ENCODE measurements at regions of chr2 and their contacts with region 1.

Region 1: DNA sequence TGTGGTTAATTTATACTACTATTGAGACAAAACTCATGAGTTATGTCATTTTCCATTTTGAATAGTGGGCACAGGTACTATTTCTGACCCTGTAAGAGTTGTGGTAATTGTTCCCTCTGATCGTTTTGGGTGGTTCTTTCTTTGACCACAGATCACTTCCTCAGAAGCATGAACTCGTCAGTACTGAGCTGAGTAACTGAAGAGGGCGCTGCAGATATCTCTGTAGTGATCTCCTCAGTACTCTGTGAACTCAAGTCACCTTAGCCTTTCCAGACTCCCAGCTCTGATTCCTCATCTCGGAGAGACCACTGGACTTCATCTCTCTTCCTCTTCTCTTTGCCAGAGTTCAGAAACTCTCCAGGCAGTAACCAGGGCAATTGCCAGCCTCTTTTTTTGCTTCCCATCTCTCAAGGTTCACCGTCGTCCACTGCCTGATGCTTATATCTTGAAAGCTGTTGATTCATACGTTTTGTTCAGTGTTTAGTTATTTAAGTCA is 9.4 kb upstream of the IL1RL1 start:
- DNase-seq: peak; percentile 47
- ATAC-seq: peak; percentile 100
- H3K4me3 ChIP-seq: no peak overlapping the region
- H3K27ac ChIP-seq: no peak overlapping the region
- H3K4me1 ChIP-seq: no peaks in the 10 kb centered on the region
- H3K27me3 ChIP-seq: no peaks in the 10 kb centered on the region
- CTCF ChIP-seq: peak; percentile 55 to 67 (median 57)
- EP300 ChIP-seq: peak in 1 of 2 experiments; percentile 52; a peak in 1 of 4 replicates
- POLR2A ChIP-seq: no peak
- RAD21 ChIP-seq: peak; percentile 55

Region 2: DNA sequence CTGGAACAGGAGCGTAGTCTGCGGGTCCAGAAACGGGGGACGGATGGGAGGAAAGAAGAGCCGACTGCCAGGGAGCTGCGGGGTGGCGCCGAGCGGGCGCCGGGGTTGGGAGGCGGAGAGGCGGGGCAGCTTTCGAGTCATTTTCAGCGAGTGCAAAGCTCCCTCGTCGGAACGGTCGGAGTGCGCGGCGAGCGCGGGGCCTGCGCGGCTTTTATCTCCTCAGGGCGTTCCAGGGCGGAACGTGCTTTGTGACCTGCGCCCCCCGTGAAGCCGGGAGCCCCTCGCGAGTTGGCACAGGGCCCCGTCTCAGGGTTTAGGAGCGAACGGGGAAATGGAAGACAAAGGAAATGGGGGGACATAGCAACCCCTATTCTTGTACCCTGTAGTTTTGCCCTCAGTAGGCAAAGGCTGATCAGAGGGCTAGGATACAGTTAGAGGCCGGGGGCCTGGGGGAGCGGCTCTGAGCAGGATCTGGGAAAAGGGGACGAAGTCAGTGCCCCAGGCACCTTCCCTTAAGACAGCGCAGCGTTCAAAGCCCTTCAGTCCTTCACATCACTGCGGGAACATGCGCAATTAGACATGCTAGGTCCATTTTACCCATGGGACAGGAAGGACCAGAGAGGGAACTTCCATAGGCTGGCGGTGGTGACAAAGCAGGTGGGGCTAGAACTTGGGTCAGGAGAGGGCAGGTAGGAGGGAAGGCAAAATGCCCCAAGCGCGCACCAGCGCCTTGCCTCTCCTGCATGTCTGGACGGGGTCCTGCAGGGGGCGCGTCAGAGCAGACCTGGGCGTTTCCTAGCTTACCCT is 50.7 kb before region 1 on chr2:
- CTCF ChIA-PET with region 1: interaction called, 14 read pairs
- POLR2A ChIA-PET with region 1: no interaction called
- RAD21 ChIA-PET with region 1: interaction called, 5 read pairs
- SMC1A ChIA-PET with region 1: interaction called, 5 read pairs
- in situ Hi-C with region 1: no loop called
- intact Hi-C with region 1: no loop called
- DNase-seq: no peak
- ATAC-seq: peak; percentile 80
- H3K4me3 ChIP-seq: no peak overlapping the region
- H3K27ac ChIP-seq: no peak overlapping the region
- H3K4me1 ChIP-seq: no peaks in the 10 kb centered on the region
- H3K27me3 ChIP-seq: no peaks in the 10 kb centered on the region; a peak in 1 of 4 replicates
- CTCF ChIP-seq: peak; percentile 58 to 63 (median 60)
- EP300 ChIP-seq: no peak
- POLR2A ChIP-seq: no peak
- RAD21 ChIP-seq: 0 out of 2 replicates have a peak, but pooled peaks have one; percentile 25

Region 3: GRCh38 chr2:102283996-102284395 is 17.9 kb before region 1 on chr2:
- CTCF ChIA-PET with region 1: interaction called, 10 read pairs
- POLR2A ChIA-PET with region 1: no interaction called
- RAD21 ChIA-PET with region 1: interaction called, 5 read pairs
- SMC1A ChIA-PET with region 1: no interaction called
- in situ Hi-C with region 1: no loop called
- intact Hi-C with region 1: no loop called
- DNase-seq: no peak
- ATAC-seq: no peak
- H3K4me3 ChIP-seq: no peak overlapping the region
- H3K27ac ChIP-seq: no peak overlapping the region
- H3K4me1 ChIP-seq: no peaks in the 10 kb centered on the region
- H3K27me3 ChIP-seq: no peaks in the 10 kb centered on the region; a peak in 1 of 4 replicates
- CTCF ChIP-seq: no peak
- EP300 ChIP-seq: no peak
- POLR2A ChIP-seq: no peak
- RAD21 ChIP-seq: no peak

Region 4: GRCh38 chr2:102291318-102292251 is 10.3 kb before region 1 on chr2:
- CTCF ChIA-PET with region 1: interaction called, 15 read pairs
- POLR2A ChIA-PET with region 1: no interaction called
- RAD21 ChIA-PET with region 1: interaction called, 6 read pairs
- SMC1A ChIA-PET with region 1: interaction called, 4 read pairs
- in situ Hi-C with region 1: no loop called
- intact Hi-C with region 1: no loop called
- DNase-seq: no peak
- ATAC-seq: no peak
- H3K4me3 ChIP-seq: no peak overlapping the region
- H3K27ac ChIP-seq: no peak overlapping the region
- H3K4me1 ChIP-seq: no peaks in the 10 kb centered on the region
- H3K27me3 ChIP-seq: no peaks in the 10 kb centered on the region; a peak in 3 of 4 replicates
- CTCF ChIP-seq: no peak
- EP300 ChIP-seq: no peak
- POLR2A ChIP-seq: no peak
- RAD21 ChIP-seq: no peak

Region 5: GRCh38 chr2:102355526-102356380 is 53.8 kb after region 1 on chr2 and contains the start of gene IL18R1:
- CTCF ChIA-PET with region 1: interaction called, 18 read pairs
- POLR2A ChIA-PET with region 1: no interaction called
- RAD21 ChIA-PET with region 1: interaction called, 6 read pairs
- SMC1A ChIA-PET with region 1: interaction called, 6 read pairs
- in situ Hi-C with region 1: no loop called
- intact Hi-C with region 1: no loop called
- DNase-seq: peak; percentile 42
- ATAC-seq: peak; percentile 88
- H3K4me3 ChIP-seq: peak within 1 kb of the TSS; percentile 96
- H3K27ac ChIP-seq: peak within 1 kb of the TSS; percentile 91
- H3K4me1 ChIP-seq: peaks cover 4% of the 10 kb centered on the region
- H3K27me3 ChIP-seq: no peaks in the 10 kb centered on the region
- CTCF ChIP-seq: peak; percentile 72 to 91 (median 82)
- EP300 ChIP-seq: no peak
- POLR2A ChIP-seq: no peak
- RAD21 ChIP-seq: peak; percentile 76
- polyA plus RNA-seq, gene IL18R1: 3.5 to 3.8 TPM

Region 6: GRCh38 chr2:102449370-102449974 is 147.6 kb after region 1 on chr2:
- CTCF ChIA-PET with region 1: interaction called, 54 read pairs
- POLR2A ChIA-PET with region 1: no interaction called
- RAD21 ChIA-PET with region 1: interaction called, 17 read pairs
- SMC1A ChIA-PET with region 1: interaction called, 26 read pairs
- in situ Hi-C with region 1: no loop called
- intact Hi-C with region 1: no loop called
- DNase-seq: no peak
- ATAC-seq: peak; percentile 78
- H3K4me3 ChIP-seq: no peak overlapping the region
- H3K27ac ChIP-seq: no peak overlapping the region
- H3K4me1 ChIP-seq: no peaks in the 10 kb centered on the region
- H3K27me3 ChIP-seq: no peaks in the 10 kb centered on the region
- CTCF ChIP-seq: peak; percentile 49 to 79 (median 58); a peak in 5 of 6 replicates
- EP300 ChIP-seq: no peak
- POLR2A ChIP-seq: no peak
- RAD21 ChIP-seq: peak; percentile 87

Measured in GM12878 (cell line).